ENCODE measurements at regions of chr18 and their contacts with region 1.

Region 1: GRCh38 chr18:750456-750855 is 38.0 kb upstream of the ENOSF1 start:
- DNase-seq: no peak
- ATAC-seq: no peak
- H3K4me3 ChIP-seq: no peak overlapping the region
- H3K4me3 Mint-ChIP-seq: no peak overlapping the region
- H3K27ac ChIP-seq: no peak overlapping the region
- H3K27ac Mint-ChIP-seq: peak overlapping the region in 1 of 9 donors; percentile 5
- H3K4me1 ChIP-seq: no peaks in the 10 kb centered on the region
- H3K4me1 Mint-ChIP-seq: peaks cover 0 to 5% (median 0%) of the 10 kb centered on the region in 7 donors
- H3K27me3 ChIP-seq: no peaks in the 10 kb centered on the region
- H3K27me3 Mint-ChIP-seq: no peaks in the 10 kb centered on the region

Region 2: DNA sequence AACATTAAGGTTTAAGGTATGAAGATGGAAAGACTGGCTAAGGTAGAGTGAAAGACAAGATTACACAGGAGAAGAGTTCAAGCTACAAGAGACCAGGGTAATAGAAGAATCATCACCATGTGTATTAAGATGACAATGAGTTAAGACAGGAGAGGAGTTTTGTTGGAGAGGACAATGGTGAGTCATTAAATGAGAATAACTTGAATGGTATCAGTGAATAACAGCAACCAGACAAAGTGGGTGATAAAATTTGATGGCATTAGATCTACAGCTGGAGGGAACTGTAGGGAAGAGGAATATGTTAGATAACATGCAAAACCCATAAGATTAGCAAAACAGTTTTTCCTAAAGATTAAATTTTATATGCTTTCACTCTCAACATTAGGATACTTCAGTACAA is 19.3 kb before region 1 on chr18:
- CTCF ChIA-PET with region 1: no interaction called
- POLR2A ChIA-PET with region 1: no interaction called
- intact Hi-C with region 1: no loop called
- DNase-seq: no peak
- ATAC-seq: no peak
- H3K4me3 ChIP-seq: no peak overlapping the region
- H3K4me3 Mint-ChIP-seq: no peak overlapping the region
- H3K27ac ChIP-seq: no peak overlapping the region
- H3K27ac Mint-ChIP-seq: no peak overlapping the region
- H3K4me1 ChIP-seq: no peaks in the 10 kb centered on the region
- H3K4me1 Mint-ChIP-seq: peaks cover 0 to 7% (median 0%) of the 10 kb centered on the region in 7 donors
- H3K27me3 ChIP-seq: no peaks in the 10 kb centered on the region
- H3K27me3 Mint-ChIP-seq: no peaks in the 10 kb centered on the region

Region 3: GRCh38 chr18:799943-800342 is 49.5 kb after region 1 on chr18:
- CTCF ChIA-PET with region 1: no interaction called
- POLR2A ChIA-PET with region 1: no interaction called
- intact Hi-C with region 1: loop called in 1 of 2 experiments (anchors 5 kb)
- DNase-seq: no peak
- ATAC-seq: no peak
- H3K4me3 ChIP-seq: no peak overlapping the region
- H3K4me3 Mint-ChIP-seq: peak overlapping the region in 1 of 10 donors; percentile 33
- H3K27ac ChIP-seq: no peak overlapping the region
- H3K27ac Mint-ChIP-seq: peak overlapping the region in 1 of 9 donors; percentile 17
- H3K4me1 ChIP-seq: peaks cover 0 to 20% of the 10 kb centered on the region in 2 donors
- H3K4me1 Mint-ChIP-seq: peaks cover 25 to 86% (median 66%) of the 10 kb centered on the region in 7 donors
- H3K27me3 ChIP-seq: no peaks in the 10 kb centered on the region
- H3K27me3 Mint-ChIP-seq: no peaks in the 10 kb centered on the region

Measured in naive thymus-derived CD4-positive, alpha-beta T cell (primary cell).